HEK293T (cell line): ENCODE measurements at regions of chr7 and their contacts with region 1.

Region 1: DNA sequence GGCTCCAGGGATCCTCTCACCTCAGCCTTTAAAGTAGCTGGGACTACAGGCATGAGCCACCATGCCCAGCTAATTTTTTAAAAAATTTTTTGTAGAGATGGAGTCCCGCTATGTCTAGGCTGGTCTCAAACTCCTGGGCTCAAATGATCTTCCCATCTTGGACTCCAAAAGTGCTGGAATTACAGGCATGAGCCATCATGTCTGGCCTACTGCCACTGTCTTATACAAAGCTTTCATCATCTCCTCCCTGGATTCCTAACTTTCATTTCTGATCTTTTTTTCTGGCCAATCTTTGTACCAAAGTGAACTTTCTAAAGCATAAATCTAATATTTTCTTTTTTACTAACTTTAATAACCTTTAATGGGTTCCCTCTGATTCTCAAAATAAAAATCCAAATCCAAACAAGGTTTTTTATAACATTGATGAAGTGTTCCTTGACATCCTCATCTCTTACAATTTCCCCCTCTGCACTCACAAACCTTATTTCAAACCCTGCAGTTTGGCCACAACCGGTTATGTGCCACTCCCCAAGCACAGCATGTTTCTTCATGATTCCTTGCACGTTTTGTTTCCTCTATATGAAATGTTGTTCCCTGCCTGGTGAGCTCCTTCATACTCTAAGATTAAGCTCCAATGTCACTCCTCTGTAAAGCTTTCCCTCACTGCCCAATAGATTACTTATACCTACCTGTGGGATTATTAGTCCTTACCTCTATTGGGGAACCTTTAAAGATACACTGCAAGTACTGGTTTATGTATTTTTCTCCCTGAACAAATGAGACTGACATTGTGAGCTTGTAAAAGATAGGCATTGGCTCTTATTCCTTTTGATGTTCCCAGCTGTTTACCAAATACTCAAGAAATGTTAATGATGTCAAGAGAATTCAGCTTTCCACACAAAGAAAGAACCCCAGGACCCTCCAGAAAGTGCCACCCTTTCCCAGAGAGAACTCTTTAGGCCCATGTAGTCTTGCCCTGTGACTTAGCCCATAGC is 101.7 kb downstream of the HOXA1 start:
- DNase-seq: no peak

Region 2: GRCh38 chr7:27083646-27084045 is 89.5 kb after region 1 on chr7:
- CTCF ChIA-PET with region 1: interaction called, 10 read pairs
- POLR2A ChIA-PET with region 1: no interaction called
- DNase-seq: no peak